PC-9 (cell line): ENCODE measurements at regions of chr3 and their contacts with region 1.

Region 1: GRCh38 chr3:45929042-45929679 is 14.1 kb upstream of the CXCR6 start:
- DNase-seq: peak in 1 of 2 experiments; percentile 52
- H3K4me3 ChIP-seq: no peak overlapping the region
- H3K27ac ChIP-seq: no peak overlapping the region
- H3K4me1 ChIP-seq: no peaks in the 10 kb centered on the region
- H3K27me3 ChIP-seq: no peaks in the 10 kb centered on the region
- CTCF ChIP-seq: peak; percentile 77

Region 2: DNA sequence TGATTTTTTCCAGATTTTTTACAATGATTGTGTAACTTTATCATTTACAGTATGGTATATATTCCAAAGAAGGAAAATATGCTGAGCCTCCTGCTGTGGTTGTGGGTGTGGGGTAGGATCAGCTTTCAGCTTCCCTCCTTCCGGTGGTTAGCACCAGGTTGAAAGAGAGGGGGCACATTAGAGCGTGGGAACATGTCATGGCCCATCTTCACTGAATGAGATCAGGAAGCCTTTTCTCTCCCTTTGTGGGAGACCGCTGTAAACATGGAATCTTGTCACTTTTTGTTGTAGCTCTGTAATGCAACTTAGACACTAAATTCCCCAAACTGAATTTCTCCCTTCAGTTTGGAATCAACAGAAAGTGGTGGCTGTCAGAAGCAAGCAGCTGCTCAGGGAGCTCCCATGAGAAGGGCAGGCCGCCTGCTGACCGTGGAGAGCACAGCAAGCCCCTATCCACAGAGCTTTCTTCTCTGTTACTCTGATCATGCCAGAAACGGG is 421.3 kb before region 1 on chr3:
- CTCF ChIA-PET with region 1: interaction called, 5 read pairs
- POLR2A ChIA-PET with region 1: no interaction called
- intact Hi-C with region 1: loop called (anchors 5 kb)
- DNase-seq: no peak
- H3K4me3 ChIP-seq: no peak overlapping the region
- H3K27ac ChIP-seq: no peak overlapping the region
- H3K4me1 ChIP-seq: no peaks in the 10 kb centered on the region
- H3K27me3 ChIP-seq: no peaks in the 10 kb centered on the region
- CTCF ChIP-seq: no peak

Region 3: GRCh38 chr3:45826321-45826720 is 102.8 kb before region 1 on chr3:
- CTCF ChIA-PET with region 1: no interaction called
- POLR2A ChIA-PET with region 1: no interaction called
- intact Hi-C with region 1: no loop called
- DNase-seq: no peak
- H3K4me3 ChIP-seq: no peak overlapping the region
- H3K27ac ChIP-seq: no peak overlapping the region
- H3K4me1 ChIP-seq: no peaks in the 10 kb centered on the region
- H3K27me3 ChIP-seq: no peaks in the 10 kb centered on the region
- CTCF ChIP-seq: no peak

Region 4: DNA sequence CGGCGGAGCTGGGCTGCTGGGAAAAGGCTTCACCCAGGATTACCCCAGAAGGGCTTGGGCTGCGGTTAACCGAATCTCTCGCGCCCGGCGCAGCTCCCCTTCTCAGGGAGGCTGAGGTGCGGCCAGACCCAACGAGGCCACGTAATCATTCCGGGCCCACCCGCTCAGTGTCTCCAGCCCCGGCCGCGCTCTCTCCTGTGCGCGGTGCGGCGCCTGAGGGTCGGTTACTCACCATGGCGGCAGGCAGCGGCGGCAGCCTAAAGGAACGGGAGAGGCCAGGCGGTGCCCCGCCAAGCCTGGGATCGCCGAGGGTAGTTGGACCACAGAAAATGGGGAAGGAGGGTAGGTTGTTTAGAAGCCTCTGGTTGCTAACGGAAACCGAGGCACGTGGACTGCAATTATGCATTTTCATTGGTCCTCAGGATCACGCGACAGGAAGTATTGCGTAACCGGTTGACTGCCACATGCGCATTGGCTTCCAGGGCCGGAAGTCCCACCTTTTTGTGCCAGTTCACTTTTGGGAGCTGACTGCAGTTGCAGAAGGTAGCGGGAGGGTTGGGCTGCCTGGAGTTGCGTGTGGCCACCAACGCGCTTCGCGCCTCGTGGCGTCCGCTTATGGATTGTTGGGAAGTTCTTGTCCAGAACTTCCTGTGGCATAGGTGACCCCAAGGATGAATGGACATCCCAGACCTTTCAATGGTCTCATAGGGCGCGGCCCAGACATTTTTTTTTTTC is 87.2 kb before region 1 on chr3 and contains the start of gene LZTFL1:
- CTCF ChIA-PET with region 1: no interaction called
- POLR2A ChIA-PET with region 1: no interaction called
- intact Hi-C with region 1: loop called (anchors 5 kb)
- DNase-seq: peak; percentile 87 to 92
- H3K4me3 ChIP-seq: peak within 1 kb of the TSS; percentile 93
- H3K27ac ChIP-seq: peak within 1 kb of the TSS; percentile 36
- H3K4me1 ChIP-seq: peaks cover 8% of the 10 kb centered on the region; the same call in 1 of the 2 replicates
- H3K27me3 ChIP-seq: no peaks in the 10 kb centered on the region; the same call in 1 of the 2 replicates
- CTCF ChIP-seq: no peak
- total RNA-seq, gene LZTFL1: 21.2 and 39.2 TPM in 2 replicates

Region 5: GRCh38 chr3:46882377-46883053 is 953.4 kb after region 1 on chr3:
- CTCF ChIA-PET with region 1: no interaction called
- POLR2A ChIA-PET with region 1: no interaction called
- intact Hi-C with region 1: no loop called
- DNase-seq: no peak
- H3K4me3 ChIP-seq: no peak overlapping the region; the same call in 1 of the 2 replicates
- H3K27ac ChIP-seq: no peak overlapping the region
- H3K4me1 ChIP-seq: peaks cover 12% of the 10 kb centered on the region
- H3K27me3 ChIP-seq: peaks cover 35% of the 10 kb centered on the region
- CTCF ChIP-seq: no peak